Activated naive CD4-positive, alpha-beta T cell treated with anti-CD3 and anti-CD28 coated beads for 36 hours (primary cell): ENCODE measurements at regions of chr1 and their contacts with region 1.

Region 1: DNA sequence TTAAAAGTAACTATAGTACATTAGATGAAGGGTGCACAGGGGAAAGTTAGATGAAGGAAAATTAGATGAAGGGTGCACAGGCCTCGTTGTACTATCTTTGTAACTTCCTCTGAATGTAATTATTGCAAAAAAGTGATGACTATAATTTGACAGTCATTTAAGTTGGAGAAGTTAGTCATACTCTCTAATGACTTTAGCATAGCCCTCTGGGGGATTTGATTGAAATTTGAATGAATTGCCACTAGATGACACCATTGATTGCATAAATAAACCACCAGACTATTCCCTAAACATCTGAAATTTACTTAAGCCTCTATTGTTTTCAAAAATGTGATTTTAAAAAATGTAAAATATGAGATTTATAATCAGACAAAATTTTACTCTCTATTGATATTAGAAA is 102.6 kb downstream of the TPR start:
- DNase-seq: no peak
- H3K4me3 Mint-ChIP-seq: no peak overlapping the region
- H3K27ac Mint-ChIP-seq: peak overlapping the region; percentile 65
- H3K4me1 Mint-ChIP-seq: peaks cover 40% of the 10 kb centered on the region
- H3K27me3 Mint-ChIP-seq: no peaks in the 10 kb centered on the region

Region 2: DNA sequence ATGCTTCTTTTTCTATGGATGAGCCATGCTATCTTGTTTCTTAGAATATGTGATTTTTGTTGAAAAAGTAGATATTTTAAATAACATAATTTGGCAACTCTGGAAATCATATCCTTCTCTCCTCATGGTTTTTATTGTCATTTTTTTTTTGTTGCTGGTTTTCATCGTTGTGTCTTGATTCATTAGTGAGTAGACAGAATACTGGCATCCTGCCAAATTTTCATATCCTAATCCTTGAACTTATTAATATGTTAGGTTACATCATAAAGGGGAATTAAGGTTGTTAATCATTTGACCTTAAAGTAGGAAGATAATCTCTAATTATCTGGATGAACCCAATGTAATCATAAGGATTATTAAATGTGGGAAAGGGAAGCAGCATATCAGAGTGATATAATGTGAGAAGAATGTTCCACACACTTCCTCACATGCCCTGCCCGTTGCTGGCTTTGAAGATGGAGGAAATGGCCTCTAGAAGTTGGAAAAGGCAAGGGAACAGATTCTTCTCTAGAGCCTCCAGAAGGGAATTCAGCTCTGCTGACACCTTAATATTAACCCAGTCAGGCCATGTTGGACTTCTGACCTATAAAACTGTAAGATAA is 238.6 kb before region 1 on chr1:
- CTCF ChIA-PET with region 1: no interaction called
- intact Hi-C with region 1: no loop called
- DNase-seq: no peak
- H3K4me3 Mint-ChIP-seq: no peak overlapping the region
- H3K27ac Mint-ChIP-seq: no peak overlapping the region
- H3K4me1 Mint-ChIP-seq: no peaks in the 10 kb centered on the region
- H3K27me3 Mint-ChIP-seq: no peaks in the 10 kb centered on the region

Region 3: DNA sequence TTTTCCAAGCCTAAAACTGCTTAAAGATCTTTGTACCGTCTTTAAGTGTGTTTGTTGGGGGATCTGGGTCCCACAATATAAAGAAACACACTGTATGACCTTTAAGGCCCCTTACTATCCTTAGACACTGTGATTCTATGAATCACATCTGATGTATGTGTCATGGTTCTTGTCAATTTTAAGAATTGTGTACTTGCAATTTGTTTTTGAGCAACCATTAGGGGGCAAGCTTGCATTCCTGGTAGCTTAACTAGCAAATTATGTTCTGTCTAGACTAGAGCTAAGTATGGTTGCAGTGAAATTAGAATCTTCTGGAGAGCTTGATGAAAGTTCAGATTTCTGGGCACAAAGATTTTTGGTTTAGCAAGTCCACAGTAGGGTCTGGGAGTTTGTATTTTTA is 116.9 kb before region 1 on chr1:
- CTCF ChIA-PET with region 1: no interaction called
- intact Hi-C with region 1: loop called (anchors 1 kb)
- DNase-seq: peak; percentile 28
- H3K4me3 Mint-ChIP-seq: no peak overlapping the region
- H3K27ac Mint-ChIP-seq: no peak overlapping the region
- H3K4me1 Mint-ChIP-seq: no peaks in the 10 kb centered on the region
- H3K27me3 Mint-ChIP-seq: peaks cover 3% of the 10 kb centered on the region

Region 4: DNA sequence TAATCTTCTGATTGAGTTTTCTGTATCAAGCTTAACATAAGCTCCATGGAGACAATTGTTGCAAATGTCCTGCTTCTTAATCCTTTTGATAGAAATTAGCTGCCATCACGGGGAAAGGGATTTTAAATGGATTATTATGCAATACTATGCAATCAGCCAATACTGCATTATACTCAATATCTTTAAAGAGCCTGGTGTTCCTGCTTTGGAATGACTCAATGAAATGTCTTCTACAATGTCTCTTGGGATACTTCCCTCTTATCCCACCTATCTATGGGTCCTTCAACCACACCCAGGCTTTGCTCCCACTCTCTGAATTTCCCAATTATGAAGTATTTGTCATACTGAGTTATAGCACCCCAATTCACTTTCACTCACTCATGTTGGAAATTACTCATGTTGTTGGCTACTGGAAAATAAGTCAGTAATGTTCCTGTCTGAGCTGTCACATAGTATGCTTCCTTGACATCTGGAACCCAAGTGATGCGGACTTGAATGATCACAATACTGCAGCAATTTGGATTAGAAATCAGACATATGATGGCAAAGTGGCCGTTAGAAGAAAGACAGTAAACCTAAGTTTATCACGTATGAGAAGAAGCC is 17.6 kb after region 1 on chr1:
- CTCF ChIA-PET with region 1: interaction called, 22 read pairs
- intact Hi-C with region 1: loop called (anchors 1 kb)
- DNase-seq: peak; percentile 55
- H3K4me3 Mint-ChIP-seq: peak overlapping the region; percentile 43
- H3K27ac Mint-ChIP-seq: peak overlapping the region; percentile 99
- H3K4me1 Mint-ChIP-seq: peaks cover 90% of the 10 kb centered on the region
- H3K27me3 Mint-ChIP-seq: no peaks in the 10 kb centered on the region

Region 5: GRCh38 chr1:186304982-186305949 is 32.8 kb after region 1 on chr1:
- CTCF ChIA-PET with region 1: interaction called, 16 read pairs
- intact Hi-C with region 1: loop called (anchors 1 kb)
- DNase-seq: peak; percentile 45
- H3K4me3 Mint-ChIP-seq: no peak overlapping the region
- H3K27ac Mint-ChIP-seq: peak overlapping the region; percentile 95
- H3K4me1 Mint-ChIP-seq: peaks cover 63% of the 10 kb centered on the region
- H3K27me3 Mint-ChIP-seq: no peaks in the 10 kb centered on the region

Region 6: DNA sequence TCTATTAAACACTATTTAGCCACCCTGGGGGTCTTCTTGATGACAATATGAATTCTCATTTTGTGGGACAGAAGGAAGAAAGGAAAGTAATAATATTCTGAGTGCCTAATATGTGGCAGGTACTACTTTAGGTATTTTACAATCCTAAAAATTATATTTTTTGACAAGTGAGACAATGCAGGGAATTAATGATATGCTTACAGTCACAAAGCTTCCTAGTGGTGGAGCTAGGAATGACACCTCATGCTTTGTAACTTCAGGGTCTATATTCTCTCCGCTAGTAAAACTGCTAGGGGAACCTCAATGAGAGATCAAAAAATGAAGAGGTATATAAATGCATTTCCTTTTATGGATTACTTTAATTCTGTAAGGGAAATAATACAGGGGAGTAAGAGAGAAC is 58.3 kb after region 1 on chr1:
- CTCF ChIA-PET with region 1: interaction called, 31 read pairs
- intact Hi-C with region 1: loop called (anchors 1 kb)
- DNase-seq: no peak
- H3K4me3 Mint-ChIP-seq: no peak overlapping the region
- H3K27ac Mint-ChIP-seq: no peak overlapping the region
- H3K4me1 Mint-ChIP-seq: peaks cover 7% of the 10 kb centered on the region
- H3K27me3 Mint-ChIP-seq: no peaks in the 10 kb centered on the region

Region 7: GRCh38 chr1:186618401-186619170 is 346.1 kb after region 1 on chr1:
- CTCF ChIA-PET with region 1: no interaction called
- intact Hi-C with region 1: loop called (anchors 2 kb)
- DNase-seq: peak; percentile 77
- H3K4me3 Mint-ChIP-seq: no peak overlapping the region
- H3K27ac Mint-ChIP-seq: no peak overlapping the region
- H3K4me1 Mint-ChIP-seq: peaks cover 42% of the 10 kb centered on the region
- H3K27me3 Mint-ChIP-seq: peaks cover 2% of the 10 kb centered on the region

Region 8: GRCh38 chr1:186985889-186986491 is 713.5 kb after region 1 on chr1:
- CTCF ChIA-PET with region 1: no interaction called
- intact Hi-C with region 1: loop called (anchors 2 kb)
- DNase-seq: no peak
- H3K4me3 Mint-ChIP-seq: no peak overlapping the region
- H3K27ac Mint-ChIP-seq: no peak overlapping the region
- H3K4me1 Mint-ChIP-seq: no peaks in the 10 kb centered on the region
- H3K27me3 Mint-ChIP-seq: peaks cover 8% of the 10 kb centered on the region